Psoas muscle (tissue), 8 donors: ENCODE measurements at regions of chr9 and their contacts with region 1.

Region 1: GRCh38 chr9:31740705-31741104 is 643.7 kb upstream of the ACO1 start:
- DNase-seq: no peak
- ATAC-seq: no peak
- H3K4me3 ChIP-seq: no peak overlapping the region
- H3K27ac ChIP-seq: no peak overlapping the region
- H3K4me1 ChIP-seq: no peaks in the 10 kb centered on the region
- H3K27me3 ChIP-seq: no peaks in the 10 kb centered on the region
- CTCF ChIP-seq: no peak

Region 2: DNA sequence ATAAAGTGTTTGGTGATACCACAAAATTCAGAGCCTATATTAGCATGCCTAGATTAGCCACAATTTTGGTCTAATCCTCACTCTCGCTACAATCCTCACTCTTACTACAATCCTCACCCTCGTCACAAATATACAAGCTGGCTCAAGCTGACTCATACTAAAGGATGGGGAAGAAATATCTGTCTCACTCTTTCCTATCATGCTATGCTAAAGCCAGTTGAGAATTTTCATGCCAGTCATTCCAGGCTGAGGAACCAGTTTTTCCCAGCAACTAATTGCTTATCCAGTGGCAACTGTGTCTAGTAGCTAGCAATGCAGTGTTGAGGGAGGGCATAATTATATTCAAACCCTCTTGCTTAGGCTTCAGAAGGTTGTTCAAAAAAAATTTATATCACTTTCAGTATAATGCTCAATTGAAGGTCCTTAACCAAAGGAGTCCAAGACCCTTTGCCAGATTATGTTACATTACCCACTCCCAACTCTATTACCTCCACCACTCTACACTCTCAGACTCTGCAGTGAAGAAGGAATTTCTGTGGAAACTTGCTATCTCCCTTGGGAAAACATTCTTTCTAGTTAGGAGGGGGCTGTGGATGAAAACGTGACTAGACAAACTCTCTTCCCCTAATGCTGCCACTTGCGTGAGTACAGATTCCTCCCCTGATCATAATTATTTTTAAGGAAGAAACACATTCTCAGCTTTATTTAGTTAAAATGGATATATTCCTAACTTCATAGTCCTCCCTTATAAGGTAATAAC is 166.5 kb before region 1 on chr9:
- intact Hi-C with region 1: loop called in 1 of 2 experiments (anchors 5 kb)
- DNase-seq: no peak
- ATAC-seq: no peak
- H3K4me3 ChIP-seq: no peak overlapping the region
- H3K27ac ChIP-seq: no peak overlapping the region
- H3K4me1 ChIP-seq: no peaks in the 10 kb centered on the region
- H3K27me3 ChIP-seq: no peaks in the 10 kb centered on the region
- CTCF ChIP-seq: no peak

Region 3: DNA sequence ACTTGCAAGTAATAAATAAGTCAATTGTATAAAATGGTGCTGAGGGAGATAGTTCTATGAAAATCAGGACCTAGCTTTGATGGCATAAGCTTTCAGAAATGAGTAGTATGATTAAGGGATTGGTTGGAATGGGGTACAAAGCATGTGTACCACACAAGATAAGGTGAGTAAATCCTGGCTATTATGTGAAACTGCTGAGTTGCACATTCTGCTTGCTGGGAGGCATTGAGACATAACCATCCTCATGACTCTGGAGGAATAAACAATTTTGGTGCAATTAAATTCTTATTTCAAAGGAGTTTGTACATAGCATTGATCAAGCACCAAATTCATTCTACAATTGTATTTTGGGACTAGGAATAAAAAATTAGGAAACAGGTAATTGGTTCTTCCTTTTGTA is 111.4 kb before region 1 on chr9:
- intact Hi-C with region 1: no loop called
- DNase-seq: no peak
- ATAC-seq: no peak
- H3K4me3 ChIP-seq: no peak overlapping the region
- H3K27ac ChIP-seq: no peak overlapping the region
- H3K4me1 ChIP-seq: no peaks in the 10 kb centered on the region
- H3K27me3 ChIP-seq: no peaks in the 10 kb centered on the region
- CTCF ChIP-seq: no peak